Activated B cell treated with CpG ODN at 0.5 μM for 24 hours (primary cell): ENCODE measurements at regions of chr6 and their contacts with region 1.

Region 1: DNA sequence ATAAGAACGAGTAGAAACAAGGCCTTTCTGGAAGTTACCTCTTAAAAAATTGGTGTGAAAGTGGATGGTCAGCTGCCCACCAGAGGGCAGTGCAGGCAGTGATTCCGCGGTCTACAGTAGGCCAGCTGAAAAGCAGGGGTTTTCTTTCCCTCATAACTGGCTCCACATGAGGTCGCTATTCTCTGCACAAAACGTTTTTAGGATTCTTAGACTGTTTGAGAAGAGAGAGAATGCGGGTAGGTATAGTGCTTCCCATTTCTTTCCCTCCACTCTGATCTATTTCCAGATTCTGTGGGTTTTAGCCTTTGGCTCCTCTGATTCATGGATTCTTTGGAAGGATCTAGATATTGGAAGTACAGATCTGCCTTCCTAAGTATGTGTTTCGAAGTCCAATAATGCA is 14.2 kb downstream of the FIG4 start:
- DNase-seq: peak; percentile 70
- ATAC-seq: peak; percentile 98
- H3K4me3 Mint-ChIP-seq: no peak overlapping the region
- H3K27ac Mint-ChIP-seq: no peak overlapping the region
- H3K4me1 Mint-ChIP-seq: peaks cover 52% of the 10 kb centered on the region
- H3K27me3 Mint-ChIP-seq: no peaks in the 10 kb centered on the region
- CTCF ChIP-seq: peak; percentile 98

Region 2: GRCh38 chr6:109526905-109527628 is 178.2 kb before region 1 on chr6:
- CTCF ChIA-PET with region 1: interaction called, 3 read pairs
- POLR2A ChIA-PET with region 1: no interaction called
- intact Hi-C with region 1: loop called (anchors 1 kb)
- DNase-seq: peak; percentile 27
- ATAC-seq: peak; percentile 58
- H3K4me3 Mint-ChIP-seq: no peak overlapping the region
- H3K27ac Mint-ChIP-seq: no peak overlapping the region
- H3K4me1 Mint-ChIP-seq: peaks cover 2% of the 10 kb centered on the region
- H3K27me3 Mint-ChIP-seq: no peaks in the 10 kb centered on the region
- CTCF ChIP-seq: no peak

Region 3: DNA sequence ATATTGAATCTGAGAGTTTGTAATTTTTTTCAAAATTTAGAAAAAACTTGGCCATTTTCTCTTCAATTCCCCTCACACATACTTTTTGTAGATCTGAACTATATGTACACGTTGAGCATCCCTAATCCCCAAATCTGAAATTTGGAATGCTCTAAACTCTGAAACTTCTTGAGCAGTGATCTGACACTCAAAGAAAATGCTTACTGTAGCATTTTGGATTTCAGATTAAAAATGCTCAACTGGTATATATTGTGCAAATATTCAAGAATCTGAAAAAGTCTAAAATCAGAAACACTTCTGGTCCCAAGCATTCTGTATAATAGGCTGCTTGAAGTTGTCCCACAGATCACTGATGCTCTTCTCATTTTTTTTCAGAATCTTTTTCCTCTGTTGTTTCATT is 143.4 kb before region 1 on chr6:
- CTCF ChIA-PET with region 1: no interaction called
- POLR2A ChIA-PET with region 1: no interaction called
- intact Hi-C with region 1: no loop called
- DNase-seq: no peak
- ATAC-seq: no peak
- H3K4me3 Mint-ChIP-seq: no peak overlapping the region
- H3K27ac Mint-ChIP-seq: no peak overlapping the region
- H3K4me1 Mint-ChIP-seq: no peaks in the 10 kb centered on the region
- H3K27me3 Mint-ChIP-seq: no peaks in the 10 kb centered on the region
- CTCF ChIP-seq: no peak

Region 4: DNA sequence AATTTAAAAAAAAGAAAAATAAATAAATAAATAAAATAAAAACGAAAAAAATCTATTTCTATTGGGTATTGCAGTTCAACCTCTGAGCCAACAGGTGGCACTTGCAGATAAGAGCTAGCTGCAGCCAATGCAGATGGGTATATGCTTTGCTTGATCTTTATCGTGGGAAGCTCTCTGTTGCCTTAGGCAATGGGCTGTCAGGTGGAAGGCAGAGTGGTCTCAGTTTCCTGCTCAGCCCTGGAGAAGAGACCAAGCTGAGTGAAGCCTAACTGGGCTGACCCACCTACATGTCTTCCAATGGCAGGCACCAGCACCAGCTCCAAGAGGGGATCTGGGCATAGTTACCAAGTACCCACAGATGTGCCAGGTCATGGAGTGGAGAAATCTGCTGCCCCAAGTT is 109.3 kb before region 1 on chr6:
- CTCF ChIA-PET with region 1: no interaction called
- POLR2A ChIA-PET with region 1: no interaction called
- intact Hi-C with region 1: no loop called
- DNase-seq: no peak
- ATAC-seq: no peak
- H3K4me3 Mint-ChIP-seq: no peak overlapping the region
- H3K27ac Mint-ChIP-seq: no peak overlapping the region
- H3K4me1 Mint-ChIP-seq: no peaks in the 10 kb centered on the region
- H3K27me3 Mint-ChIP-seq: no peaks in the 10 kb centered on the region
- CTCF ChIP-seq: no peak

Region 5: GRCh38 chr6:109715616-109716015 is 10.4 kb after region 1 on chr6:
- CTCF ChIA-PET with region 1: interaction called, 11 read pairs
- POLR2A ChIA-PET with region 1: no interaction called
- intact Hi-C with region 1: no loop called
- DNase-seq: no peak
- ATAC-seq: no peak
- H3K4me3 Mint-ChIP-seq: no peak overlapping the region
- H3K27ac Mint-ChIP-seq: no peak overlapping the region
- H3K4me1 Mint-ChIP-seq: peaks cover 16% of the 10 kb centered on the region
- H3K27me3 Mint-ChIP-seq: no peaks in the 10 kb centered on the region
- CTCF ChIP-seq: no peak

Region 6: DNA sequence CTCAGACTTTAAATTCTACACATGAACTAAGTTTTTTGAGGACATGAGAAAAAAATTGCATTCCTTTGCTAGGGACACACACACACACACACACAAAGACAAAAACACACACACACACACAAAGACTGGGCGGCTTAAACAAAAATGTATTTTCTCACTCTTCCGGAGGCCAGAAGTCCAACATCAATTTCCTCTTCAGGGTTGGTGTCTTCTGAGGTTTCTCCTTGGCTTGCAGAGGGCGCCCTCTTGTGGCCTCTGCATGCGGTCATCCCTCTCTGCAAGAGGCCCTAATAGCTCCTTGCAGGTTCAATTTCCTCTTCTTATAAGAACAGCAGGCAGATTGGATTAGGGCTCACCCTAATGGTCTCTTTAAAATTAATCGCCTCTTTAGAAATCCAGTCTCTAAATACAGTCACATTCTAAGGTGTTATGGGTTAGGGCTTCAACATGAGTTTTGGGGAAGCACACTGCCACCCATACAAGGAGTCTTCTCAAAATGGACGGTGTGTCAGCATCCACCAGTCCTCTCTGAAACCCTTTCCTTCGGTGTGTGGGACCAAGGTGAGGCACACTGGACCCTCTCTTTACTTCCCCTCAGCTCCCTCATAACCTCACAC is 334.2 kb after region 1 on chr6:
- CTCF ChIA-PET with region 1: interaction called, 196 read pairs
- POLR2A ChIA-PET with region 1: interaction called, 3 read pairs
- intact Hi-C with region 1: loop called (anchors 1 kb)
- DNase-seq: peak; percentile 75
- ATAC-seq: peak; percentile 87
- H3K4me3 Mint-ChIP-seq: peak overlapping the region; percentile 89
- H3K27ac Mint-ChIP-seq: peak overlapping the region; percentile 91
- H3K4me1 Mint-ChIP-seq: peaks cover 24% of the 10 kb centered on the region
- H3K27me3 Mint-ChIP-seq: no peaks in the 10 kb centered on the region
- CTCF ChIP-seq: no peak

Region 7: GRCh38 chr6:110389689-110390382 is 684.6 kb after region 1 on chr6:
- CTCF ChIA-PET with region 1: interaction called, 73 read pairs
- POLR2A ChIA-PET with region 1: interaction called, 3 read pairs
- intact Hi-C with region 1: loop called (anchors 1 kb)
- DNase-seq: no peak
- ATAC-seq: no peak
- H3K4me3 Mint-ChIP-seq: no peak overlapping the region
- H3K27ac Mint-ChIP-seq: no peak overlapping the region
- H3K4me1 Mint-ChIP-seq: no peaks in the 10 kb centered on the region
- H3K27me3 Mint-ChIP-seq: no peaks in the 10 kb centered on the region
- CTCF ChIP-seq: no peak